CD4-positive, alpha-beta T cell (primary cell): ENCODE measurements at regions of chr3 and their contacts with region 1.

Region 1: GRCh38 chr3:119240591-119241434 is at the start of gene B4GALT4:
- DNase-seq: peak; percentile 34 to 86 (median 60)
- ATAC-seq: peak; percentile 56
- H3K4me3 ChIP-seq: peak within 1 kb of the TSS; percentile 79
- H3K4me3 Mint-ChIP-seq: peak within 1 kb of the TSS; percentile 93
- H3K27ac ChIP-seq: peak within 1 kb of the TSS; percentile 81 to 86
- H3K27ac Mint-ChIP-seq: peak within 1 kb of the TSS; percentile 83
- H3K4me1 ChIP-seq: peaks cover 35% of the 10 kb centered on the region
- H3K4me1 Mint-ChIP-seq: peaks cover 46% of the 10 kb centered on the region
- H3K27me3 ChIP-seq: no peaks in the 10 kb centered on the region
- H3K27me3 Mint-ChIP-seq: no peaks in the 10 kb centered on the region
- CTCF ChIP-seq: no peak
- total RNA-seq, gene B4GALT4: 26.2 to 29.5 TPM

Region 2: GRCh38 chr3:118884748-118885206 is 356.0 kb before region 1 on chr3:
- CTCF ChIA-PET with region 1: interaction called, 15 read pairs
- POLR2A ChIA-PET with region 1: interaction called, 12 read pairs
- intact Hi-C with region 1: loop called (anchors 1 to 2 kb)
- DNase-seq: peak; percentile 62 to 85 (median 74)
- ATAC-seq: peak; percentile 85
- H3K4me3 ChIP-seq: no peak overlapping the region
- H3K4me3 Mint-ChIP-seq: no peak overlapping the region
- H3K27ac ChIP-seq: no peak overlapping the region
- H3K27ac Mint-ChIP-seq: no peak overlapping the region
- H3K4me1 ChIP-seq: no peaks in the 10 kb centered on the region
- H3K4me1 Mint-ChIP-seq: no peaks in the 10 kb centered on the region
- H3K27me3 ChIP-seq: peaks cover 0 to 15% of the 10 kb centered on the region in 2 experiments
- H3K27me3 Mint-ChIP-seq: peaks cover 12% of the 10 kb centered on the region
- CTCF ChIP-seq: peak; percentile 96

Region 3: GRCh38 chr3:119098619-119099222 is 142.1 kb before region 1 on chr3:
- CTCF ChIA-PET with region 1: no interaction called
- POLR2A ChIA-PET with region 1: interaction called, 4 read pairs
- intact Hi-C with region 1: loop called (anchors 1 to 5 kb)
- DNase-seq: peak in 4 of 14 experiments; percentile 14 to 67 (median 62)
- ATAC-seq: no peak
- H3K4me3 ChIP-seq: no peak overlapping the region
- H3K4me3 Mint-ChIP-seq: no peak overlapping the region
- H3K27ac ChIP-seq: no peak overlapping the region
- H3K27ac Mint-ChIP-seq: no peak overlapping the region
- H3K4me1 ChIP-seq: no peaks in the 10 kb centered on the region
- H3K4me1 Mint-ChIP-seq: no peaks in the 10 kb centered on the region
- H3K27me3 ChIP-seq: no peaks in the 10 kb centered on the region
- H3K27me3 Mint-ChIP-seq: no peaks in the 10 kb centered on the region
- CTCF ChIP-seq: peak; percentile 90

Region 4: GRCh38 chr3:119206611-119207511 is 34.0 kb before region 1 on chr3:
- CTCF ChIA-PET with region 1: interaction called, 3 read pairs
- POLR2A ChIA-PET with region 1: interaction called, 27 read pairs
- intact Hi-C with region 1: loop called in 1 of 2 experiments (anchors 5 kb)
- DNase-seq: peak in 4 of 14 experiments; percentile 20 to 40 (median 30)
- ATAC-seq: peak; percentile 76
- H3K4me3 ChIP-seq: no peak overlapping the region
- H3K4me3 Mint-ChIP-seq: peak overlapping the region; percentile 56
- H3K27ac ChIP-seq: peak overlapping the region; percentile 26 to 36
- H3K27ac Mint-ChIP-seq: peak overlapping the region; percentile 80
- H3K4me1 ChIP-seq: peaks cover 37% of the 10 kb centered on the region
- H3K4me1 Mint-ChIP-seq: peaks cover 87% of the 10 kb centered on the region
- H3K27me3 ChIP-seq: no peaks in the 10 kb centered on the region
- H3K27me3 Mint-ChIP-seq: no peaks in the 10 kb centered on the region
- CTCF ChIP-seq: no peak

Region 5: GRCh38 chr3:119293871-119294695 is 53.3 kb after region 1 on chr3 and contains the start of gene ARHGAP31:
- CTCF ChIA-PET with region 1: interaction called, 19 read pairs
- POLR2A ChIA-PET with region 1: interaction called, 36 read pairs
- intact Hi-C with region 1: loop called (anchors 2 kb)
- DNase-seq: peak; percentile 60 to 96 (median 78)
- ATAC-seq: peak; percentile 68
- H3K4me3 ChIP-seq: peak within 1 kb of the TSS; percentile 84
- H3K4me3 Mint-ChIP-seq: peak within 1 kb of the TSS; percentile 84
- H3K27ac ChIP-seq: peak within 1 kb of the TSS; percentile 95 to 96
- H3K27ac Mint-ChIP-seq: peak within 1 kb of the TSS; percentile 100
- H3K4me1 ChIP-seq: peaks cover 65% of the 10 kb centered on the region
- H3K4me1 Mint-ChIP-seq: peaks cover 74% of the 10 kb centered on the region
- H3K27me3 ChIP-seq: no peaks in the 10 kb centered on the region
- H3K27me3 Mint-ChIP-seq: no peaks in the 10 kb centered on the region
- CTCF ChIP-seq: no peak
- total RNA-seq, gene ARHGAP31: 2.4 to 2.9 TPM

Region 6: DNA sequence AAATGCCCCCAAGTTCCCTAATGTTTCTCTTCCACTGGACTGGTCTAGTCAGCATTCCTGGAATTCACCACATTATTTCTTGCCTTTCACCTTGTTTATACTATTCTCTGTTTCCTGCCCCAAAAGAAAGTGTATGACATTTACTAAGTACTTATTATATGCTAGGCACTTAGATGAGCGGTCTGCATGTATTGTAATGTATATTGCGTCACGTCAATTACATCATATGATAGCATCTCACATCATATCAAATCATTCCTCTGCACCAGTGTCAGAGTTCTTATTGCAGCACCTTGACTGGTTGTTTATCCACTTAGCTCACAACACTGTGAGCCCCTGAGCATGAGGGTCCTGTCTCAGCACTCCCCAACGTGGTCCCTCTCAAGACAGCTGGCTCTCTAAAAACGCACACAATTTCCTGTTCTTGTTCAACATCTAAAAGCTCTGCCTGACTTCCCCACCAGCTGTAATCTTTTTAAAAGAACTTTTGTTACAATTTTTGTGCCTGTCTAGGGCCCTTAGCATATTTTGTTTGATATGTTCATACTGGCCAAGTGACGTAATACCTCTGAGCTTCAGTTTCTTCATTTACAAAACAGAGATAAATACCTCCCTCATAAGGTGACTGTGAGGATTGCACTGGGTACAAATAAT is 112.2 kb after region 1 on chr3:
- CTCF ChIA-PET with region 1: interaction called, 13 read pairs
- POLR2A ChIA-PET with region 1: interaction called, 8 read pairs
- intact Hi-C with region 1: loop called in 1 of 2 experiments (anchors 1 kb)
- DNase-seq: peak in 4 of 14 experiments; percentile 13 to 80 (median 64)
- ATAC-seq: peak; percentile 73
- H3K4me3 ChIP-seq: no peak overlapping the region
- H3K4me3 Mint-ChIP-seq: no peak overlapping the region
- H3K27ac ChIP-seq: no peak overlapping the region
- H3K27ac Mint-ChIP-seq: peak overlapping the region; percentile 58
- H3K4me1 ChIP-seq: peaks cover 21% of the 10 kb centered on the region
- H3K4me1 Mint-ChIP-seq: peaks cover 45% of the 10 kb centered on the region
- H3K27me3 ChIP-seq: no peaks in the 10 kb centered on the region
- H3K27me3 Mint-ChIP-seq: no peaks in the 10 kb centered on the region
- CTCF ChIP-seq: peak; percentile 56